ENCODE measurements at regions of chr1 and their contacts with region 1.

Region 1: GRCh38 chr1:10209905-10210810 is at the start of gene KIF1B:
- DNase-seq: peak; percentile 98 to 99
- ATAC-seq: peak; percentile 55 to 56
- H3K4me3 ChIP-seq: peak within 1 kb of the TSS; percentile 83 to 89 (median 88)
- H3K27ac ChIP-seq: peak within 1 kb of the TSS; percentile 98 to 99 (median 99)
- H3K4me1 ChIP-seq: peaks cover 37 to 38% of the 10 kb centered on the region in 2 donors
- H3K27me3 ChIP-seq: no peaks in the 10 kb centered on the region
- CTCF ChIP-seq: peak; percentile 99 to 100 (median 100)
- POLR2A ChIP-seq: peak; percentile 100
- total RNA-seq, gene KIF1B: 203 to 445 (median 306) TPM

Region 2: GRCh38 chr1:9249534-9250410 is 960.4 kb before region 1 on chr1:
- in situ Hi-C with region 1: no loop called
- intact Hi-C with region 1: loop called (anchors 10 kb)
- DNase-seq: peak; percentile 79 to 90
- ATAC-seq: peak; percentile 21 to 22
- H3K4me3 ChIP-seq: peak overlapping the region in 3 of 4 donors; percentile 2 to 39 (median 35)
- H3K27ac ChIP-seq: peak overlapping the region; percentile 86 to 99 (median 92)
- H3K4me1 ChIP-seq: peaks cover 88 to 94% of the 10 kb centered on the region in 2 donors
- H3K27me3 ChIP-seq: no peaks in the 10 kb centered on the region
- CTCF ChIP-seq: peak in 4 of 5 experiments; percentile 46 to 84 (median 78)
- POLR2A ChIP-seq: peak in 1 of 2 donors; percentile 13

Region 3: DNA sequence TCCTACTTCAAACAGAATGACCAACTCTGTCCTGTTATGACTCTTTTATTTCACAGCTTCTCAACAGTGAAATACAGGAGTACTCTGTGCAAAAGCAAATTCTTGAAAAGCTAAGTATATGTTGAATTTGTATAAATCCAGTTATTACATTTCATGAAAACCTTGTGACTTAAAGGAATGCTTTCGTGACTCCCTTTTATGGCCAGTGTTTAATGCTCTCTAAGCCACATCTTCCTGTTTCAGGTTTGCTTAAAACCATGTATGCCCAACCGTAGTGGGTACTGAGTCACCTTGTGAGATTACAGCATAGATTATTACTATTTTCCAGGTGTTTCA is 40.0 kb before region 1 on chr1:
- in situ Hi-C with region 1: no loop called
- intact Hi-C with region 1: no loop called
- DNase-seq: no peak
- ATAC-seq: no peak
- H3K4me3 ChIP-seq: no peak overlapping the region
- H3K27ac ChIP-seq: no peak overlapping the region
- H3K4me1 ChIP-seq: no peaks in the 10 kb centered on the region
- H3K27me3 ChIP-seq: no peaks in the 10 kb centered on the region
- CTCF ChIP-seq: no peak
- POLR2A ChIP-seq: no peak

Region 4: DNA sequence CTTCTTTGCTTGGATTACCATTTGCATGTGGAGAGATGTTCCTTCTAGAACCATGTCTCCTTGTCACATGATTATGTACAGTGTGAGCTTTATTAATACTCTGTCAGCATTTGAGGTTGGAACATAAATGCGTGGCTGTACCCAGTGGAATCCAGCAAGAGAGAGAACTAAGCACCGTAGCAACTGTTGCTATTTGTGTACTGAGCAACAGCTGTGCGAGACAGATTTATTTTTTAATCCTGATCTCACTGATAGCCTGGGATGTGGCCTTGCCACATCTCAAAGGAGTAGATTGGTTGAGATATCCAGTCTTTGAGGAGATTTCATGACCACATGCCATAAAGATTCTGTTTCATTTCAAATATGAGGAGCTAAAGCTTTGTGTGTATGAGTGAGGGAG is 43.6 kb after region 1 on chr1:
- in situ Hi-C with region 1: no loop called
- intact Hi-C with region 1: loop called (anchors 2 kb)
- DNase-seq: peak; percentile 73 to 81
- ATAC-seq: peak; percentile 93 to 94
- H3K4me3 ChIP-seq: no peak overlapping the region
- H3K27ac ChIP-seq: peak overlapping the region; percentile 89 to 93 (median 92)
- H3K4me1 ChIP-seq: peaks cover 71 to 76% of the 10 kb centered on the region in 2 donors
- H3K27me3 ChIP-seq: no peaks in the 10 kb centered on the region
- CTCF ChIP-seq: no peak
- POLR2A ChIP-seq: peak in 1 of 2 donors; percentile 18

Region 5: GRCh38 chr1:10283318-10283984 is 73.3 kb after region 1 on chr1:
- in situ Hi-C with region 1: loop called in 1 of 4 experiments (anchors 10 kb)
- intact Hi-C with region 1: loop called (anchors 1 kb)
- DNase-seq: peak; percentile 58 to 62
- ATAC-seq: peak; percentile 37 to 66
- H3K4me3 ChIP-seq: no peak overlapping the region
- H3K27ac ChIP-seq: peak overlapping the region; percentile 83 to 92 (median 90)
- H3K4me1 ChIP-seq: peaks cover 35 to 69% of the 10 kb centered on the region in 2 donors
- H3K27me3 ChIP-seq: no peaks in the 10 kb centered on the region
- CTCF ChIP-seq: no peak
- POLR2A ChIP-seq: no peak

Region 6: DNA sequence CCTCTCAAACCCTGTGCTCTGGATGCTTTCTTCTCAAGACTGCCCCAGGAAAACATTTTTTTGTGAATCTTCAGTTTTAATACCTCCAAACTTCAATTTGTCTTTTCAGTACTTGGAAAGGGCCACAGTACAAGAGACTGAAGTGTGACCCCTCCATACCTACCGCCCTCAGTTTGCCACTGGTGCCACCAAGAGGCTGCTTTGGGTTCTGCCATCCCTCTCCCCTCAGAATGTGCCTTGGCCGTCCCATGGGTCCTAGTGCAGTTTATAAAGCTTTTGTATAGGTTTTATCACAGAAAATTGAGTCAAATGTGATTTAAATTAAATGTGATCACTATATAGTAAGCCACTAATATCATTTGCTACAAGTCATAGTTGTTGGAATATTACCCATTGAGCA is 127.9 kb after region 1 on chr1:
- in situ Hi-C with region 1: loop called (anchors 10 to 25 kb)
- intact Hi-C with region 1: loop called (anchors 1 kb)
- DNase-seq: peak in 1 of 2 donors; percentile 38
- ATAC-seq: peak; percentile 42 to 66
- H3K4me3 ChIP-seq: no peak overlapping the region
- H3K27ac ChIP-seq: peak overlapping the region in 1 of 4 donors; percentile 10
- H3K4me1 ChIP-seq: no peaks in the 10 kb centered on the region
- H3K27me3 ChIP-seq: no peaks in the 10 kb centered on the region
- CTCF ChIP-seq: peak; percentile 45 to 78 (median 62)
- POLR2A ChIP-seq: no peak